GM10248 (cell line): ENCODE measurements at regions of chrX and their contacts with region 1.

Region 1: GRCh38 chrX:11367609-11368430 is 74.6 kb downstream of the AMELX start:
- DNase-seq: no peak
- CTCF ChIP-seq: no peak

Region 2: DNA sequence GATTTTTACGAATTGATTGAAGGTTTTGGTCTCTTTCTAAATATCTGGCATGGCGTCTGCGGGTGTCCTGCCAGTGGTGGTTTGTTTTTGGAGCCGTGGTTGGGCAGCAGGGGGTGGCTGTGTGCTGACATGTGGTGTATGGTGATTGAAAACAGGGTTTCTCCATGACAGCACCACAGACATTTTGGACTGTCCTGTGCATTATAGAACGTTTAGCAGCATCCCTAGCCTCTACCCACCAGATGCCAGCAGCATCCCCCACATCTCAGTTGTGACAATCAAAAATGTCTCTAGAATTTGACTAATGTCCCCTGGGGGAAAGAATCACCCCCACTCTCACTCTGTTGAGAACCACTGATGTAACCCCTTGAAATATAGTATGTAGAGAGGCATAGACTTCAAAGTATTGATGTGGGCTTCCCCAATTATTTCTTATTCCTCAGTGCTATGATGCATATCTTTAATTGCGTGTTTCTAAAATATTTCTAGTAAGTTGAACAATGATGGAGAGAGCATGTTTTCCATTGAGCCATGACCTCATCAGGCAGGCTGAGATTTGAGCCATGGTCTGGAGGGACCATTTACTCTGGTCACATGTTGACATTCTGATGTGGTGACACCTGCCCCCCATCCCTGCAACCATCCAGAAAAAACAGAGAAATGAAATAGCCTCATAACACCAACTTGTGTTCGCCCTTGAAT is 670.1 kb before region 1 on chrX:
- CTCF ChIA-PET with region 1: no interaction called
- POLR2A ChIA-PET with region 1: no interaction called
- DNase-seq: no peak
- CTCF ChIP-seq: no peak

Region 3: DNA sequence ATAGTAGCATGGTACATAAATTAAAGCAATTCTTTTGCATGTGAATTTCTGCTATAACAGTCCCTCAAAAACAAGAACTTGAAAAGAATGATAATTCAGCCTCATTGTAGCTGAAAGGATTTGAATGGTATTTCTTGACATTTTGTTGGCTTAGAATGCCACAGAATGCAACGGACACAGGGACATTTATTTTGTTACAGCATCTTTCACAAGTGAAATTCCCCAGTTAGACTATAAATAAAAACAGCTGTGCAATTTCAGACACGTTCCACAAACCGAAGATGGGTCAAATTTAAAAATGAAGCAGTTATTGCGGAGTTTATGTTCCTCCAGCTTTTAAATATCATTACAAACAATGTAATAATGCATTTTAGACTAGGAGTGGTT is 157.4 kb before region 1 on chrX:
- CTCF ChIA-PET with region 1: no interaction called
- POLR2A ChIA-PET with region 1: no interaction called
- DNase-seq: no peak
- CTCF ChIP-seq: no peak

Region 4: GRCh38 chrX:11381464-11381863 is 13.6 kb after region 1 on chrX:
- CTCF ChIA-PET with region 1: interaction called, 24 read pairs
- POLR2A ChIA-PET with region 1: no interaction called
- DNase-seq: peak; percentile 9
- CTCF ChIP-seq: peak; percentile 25